Panc1 (cell line): ENCODE measurements at regions of chr10 and their contacts with region 1.

Region 1: GRCh38 chr10:12768156-12769100 is 233.1 kb downstream of the CCDC3 start:
- DNase-seq: peak; percentile 2
- ATAC-seq: no peak
- H3K4me3 ChIP-seq: no peak overlapping the region
- H3K27ac ChIP-seq: no peak overlapping the region
- H3K4me1 ChIP-seq: no peaks in the 10 kb centered on the region
- H3K27me3 ChIP-seq: no peaks in the 10 kb centered on the region
- CTCF ChIP-seq: no peak

Region 2: GRCh38 chr10:12681252-12681651 is 87.2 kb before region 1 on chr10:
- CTCF ChIA-PET with region 1: no interaction called
- POLR2A ChIA-PET with region 1: no interaction called
- in situ Hi-C with region 1: no loop called
- intact Hi-C with region 1: no loop called
- DNase-seq: no peak
- ATAC-seq: no peak
- H3K4me3 ChIP-seq: no peak overlapping the region
- H3K27ac ChIP-seq: no peak overlapping the region
- H3K4me1 ChIP-seq: no peaks in the 10 kb centered on the region
- H3K27me3 ChIP-seq: no peaks in the 10 kb centered on the region
- CTCF ChIP-seq: no peak

Region 3: DNA sequence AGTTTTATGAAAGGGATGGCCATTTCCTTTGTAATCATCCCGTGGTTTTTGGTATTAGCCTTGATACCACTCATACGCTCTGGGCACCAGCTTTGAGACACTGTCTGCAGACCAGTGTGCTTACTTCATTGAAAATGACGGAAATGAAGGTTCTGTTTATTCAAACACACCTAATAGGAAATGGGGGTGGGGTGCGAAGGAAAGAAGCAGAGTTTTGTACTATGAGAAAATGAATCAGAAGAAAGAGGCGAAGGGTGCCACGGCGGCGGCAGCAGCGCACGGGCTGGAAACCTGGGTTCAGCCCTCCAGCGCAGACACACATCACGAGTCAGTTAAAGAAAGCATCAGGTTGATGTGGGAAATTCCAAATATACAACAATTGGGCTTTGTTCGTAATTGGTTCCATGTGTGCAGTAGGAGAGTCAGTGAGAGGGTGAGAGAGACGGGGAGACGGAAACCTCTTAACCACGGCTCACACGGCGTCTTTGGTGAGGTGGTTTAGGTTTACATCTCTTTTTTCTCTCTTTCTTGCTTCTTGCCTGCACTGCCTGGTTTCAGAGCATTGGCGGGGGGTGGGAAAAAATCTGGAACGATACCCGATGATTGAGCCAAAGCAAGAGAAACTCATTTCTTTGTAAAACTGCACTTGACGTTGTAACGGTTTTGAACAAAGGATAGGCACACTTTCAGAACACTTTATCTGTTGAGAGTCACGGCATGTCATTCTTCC is 1241.1 kb after region 1 on chr10:
- CTCF ChIA-PET with region 1: no interaction called
- POLR2A ChIA-PET with region 1: interaction called, 17 read pairs
- in situ Hi-C with region 1: no loop called
- intact Hi-C with region 1: no loop called
- DNase-seq: no peak
- ATAC-seq: peak; percentile 59
- H3K4me3 ChIP-seq: peak overlapping the region; percentile 30 to 67
- H3K27ac ChIP-seq: peak overlapping the region; percentile 48; the same call in 1 of the 2 replicates
- H3K4me1 ChIP-seq: peaks cover 3% of the 10 kb centered on the region; the same call in 1 of the 2 replicates
- H3K27me3 ChIP-seq: peaks cover 2% of the 10 kb centered on the region; the same call in 1 of the 2 replicates
- CTCF ChIP-seq: no peak